ENCODE measurements at regions of chr7 and their contacts with region 1.

Region 1: GRCh38 chr7:148962823-148963582 is 65.3 kb downstream of the PDIA4 start:
- DNase-seq: peak; percentile 76
- ATAC-seq: peak; percentile 78
- H3K4me3 Mint-ChIP-seq: peak overlapping the region; percentile 90
- H3K27ac Mint-ChIP-seq: peak overlapping the region; percentile 85
- H3K4me1 Mint-ChIP-seq: peaks cover 33% of the 10 kb centered on the region
- H3K27me3 Mint-ChIP-seq: peaks cover 5% of the 10 kb centered on the region

Region 2: GRCh38 chr7:148856891-148857290 is 106.1 kb before region 1 on chr7:
- CTCF ChIA-PET with region 1: interaction called, 22 read pairs
- POLR2A ChIA-PET with region 1: no interaction called
- DNase-seq: no peak
- ATAC-seq: peak; percentile 5
- H3K4me3 Mint-ChIP-seq: no peak overlapping the region
- H3K27ac Mint-ChIP-seq: no peak overlapping the region
- H3K4me1 Mint-ChIP-seq: peaks cover 35% of the 10 kb centered on the region
- H3K27me3 Mint-ChIP-seq: no peaks in the 10 kb centered on the region

Region 3: DNA sequence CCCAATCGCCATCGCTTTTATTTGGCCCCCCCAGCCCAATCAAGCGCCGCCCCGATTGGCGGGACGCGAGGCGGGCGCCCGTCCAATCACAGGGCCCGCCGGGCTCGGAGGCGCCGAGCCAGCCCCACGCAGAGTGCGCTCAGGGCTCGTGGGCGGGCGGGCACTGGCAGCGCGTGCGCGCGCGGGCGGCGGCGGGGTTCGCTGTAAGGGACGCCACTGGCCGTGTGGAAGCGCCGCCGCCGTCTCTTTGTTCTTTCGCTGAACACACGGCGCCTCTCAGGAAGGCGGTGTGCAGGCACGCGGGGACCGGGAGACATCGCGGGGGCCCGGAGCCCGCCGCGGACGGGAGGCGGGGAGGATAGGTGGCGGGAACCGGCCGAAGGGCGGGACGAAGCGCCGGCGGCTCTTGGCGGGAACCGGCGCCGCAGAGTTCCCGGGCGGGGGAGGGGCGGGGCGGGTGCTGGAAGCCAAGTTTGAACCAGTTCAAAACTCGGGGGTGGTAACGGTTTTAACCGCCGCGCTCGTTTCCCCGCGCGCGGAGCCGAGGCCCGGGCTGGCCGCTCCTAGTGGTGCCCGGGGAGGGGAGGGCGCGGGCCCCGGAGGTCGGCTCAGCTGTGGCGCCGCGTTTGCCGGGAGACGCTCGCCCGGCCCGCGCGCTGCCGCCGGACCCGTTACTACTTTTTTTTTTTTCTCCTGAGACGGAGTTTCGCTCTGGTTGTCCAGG is 78.5 kb before region 1 on chr7:
- CTCF ChIA-PET with region 1: interaction called, 7 read pairs
- POLR2A ChIA-PET with region 1: interaction called, 10 read pairs
- DNase-seq: peak; percentile 95
- ATAC-seq: peak; percentile 93
- H3K4me3 Mint-ChIP-seq: peak overlapping the region; percentile 92
- H3K27ac Mint-ChIP-seq: peak overlapping the region; percentile 99
- H3K4me1 Mint-ChIP-seq: peaks cover 36% of the 10 kb centered on the region
- H3K27me3 Mint-ChIP-seq: no peaks in the 10 kb centered on the region

Region 4: DNA sequence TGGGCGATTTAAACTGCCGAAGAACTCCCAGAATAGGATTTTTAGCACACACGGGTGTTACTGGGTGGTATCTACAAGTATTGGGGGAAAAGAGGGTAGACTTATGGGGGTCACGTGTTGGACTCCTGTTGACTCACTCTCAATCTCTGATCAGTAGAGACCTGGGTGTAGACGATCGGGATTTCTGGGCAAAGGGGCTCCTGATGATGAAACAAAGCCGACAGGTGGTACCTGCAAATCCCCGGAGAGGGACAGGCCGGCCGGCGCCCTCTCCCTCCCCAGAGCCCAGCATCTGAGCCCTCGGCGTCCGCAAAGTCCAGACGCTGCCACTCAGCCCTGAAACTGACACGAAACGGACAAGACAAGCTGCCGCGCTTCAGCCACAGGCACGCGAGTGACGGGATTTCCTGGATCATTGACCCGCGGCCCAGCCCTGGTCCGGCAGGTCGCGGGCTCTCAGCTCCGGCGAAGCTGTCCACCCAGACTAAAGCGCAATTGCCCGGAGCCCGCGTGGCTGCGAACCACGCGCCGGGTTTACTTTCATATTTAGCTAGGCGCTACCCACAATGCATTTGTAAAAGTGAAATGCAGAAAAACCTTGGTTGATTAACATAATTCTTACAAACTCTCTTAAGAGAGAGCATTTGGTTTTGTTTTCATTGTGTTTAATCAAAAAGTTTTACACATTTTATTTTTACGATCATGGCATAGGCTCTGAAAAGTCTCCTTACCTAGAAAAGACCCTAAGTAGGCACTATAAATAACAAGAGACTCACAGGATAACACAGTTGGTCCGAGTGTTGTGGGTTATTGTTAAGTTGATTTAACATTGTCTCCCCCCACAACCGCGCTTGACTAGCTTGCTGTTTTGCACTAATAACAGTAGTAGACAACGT is 22.1 kb before region 1 on chr7:
- CTCF ChIA-PET with region 1: interaction called, 32 read pairs
- POLR2A ChIA-PET with region 1: interaction called, 3 read pairs
- DNase-seq: peak; percentile 77
- ATAC-seq: peak; percentile 82
- H3K4me3 Mint-ChIP-seq: peak overlapping the region; percentile 97
- H3K27ac Mint-ChIP-seq: peak overlapping the region; percentile 98
- H3K4me1 Mint-ChIP-seq: peaks cover 15% of the 10 kb centered on the region
- H3K27me3 Mint-ChIP-seq: no peaks in the 10 kb centered on the region

Region 5: DNA sequence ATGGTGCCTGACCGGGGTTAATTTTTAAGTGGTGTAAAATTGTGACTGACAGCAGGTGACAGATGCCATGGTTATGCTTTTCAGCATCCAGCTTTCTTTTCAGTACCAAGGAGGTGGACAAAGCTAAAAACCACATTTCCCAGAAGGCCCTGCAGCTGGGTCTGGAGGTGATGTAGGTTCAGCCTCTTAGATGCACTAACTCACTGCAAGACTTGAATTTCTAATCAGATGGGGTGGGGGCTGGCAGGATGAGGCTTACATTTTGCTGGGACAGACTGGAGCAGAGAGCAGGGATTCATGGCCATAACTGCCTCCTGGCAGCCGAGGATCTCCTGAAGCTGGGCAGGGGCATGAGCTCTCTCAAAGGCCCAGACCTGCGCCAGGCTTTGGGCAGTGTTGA is 12.9 kb after region 1 on chr7:
- CTCF ChIA-PET with region 1: interaction called, 11 read pairs
- POLR2A ChIA-PET with region 1: interaction called, 3 read pairs
- DNase-seq: no peak
- ATAC-seq: no peak
- H3K4me3 Mint-ChIP-seq: no peak overlapping the region
- H3K27ac Mint-ChIP-seq: no peak overlapping the region
- H3K4me1 Mint-ChIP-seq: peaks cover 15% of the 10 kb centered on the region
- H3K27me3 Mint-ChIP-seq: peaks cover 2% of the 10 kb centered on the region

Region 6: GRCh38 chr7:148987010-148987750 is 24.2 kb after region 1 on chr7:
- CTCF ChIA-PET with region 1: interaction called, 10 read pairs
- POLR2A ChIA-PET with region 1: interaction called, 4 read pairs
- DNase-seq: peak; percentile 89
- ATAC-seq: peak; percentile 86
- H3K4me3 Mint-ChIP-seq: peak overlapping the region; percentile 97
- H3K27ac Mint-ChIP-seq: peak overlapping the region; percentile 97
- H3K4me1 Mint-ChIP-seq: peaks cover 46% of the 10 kb centered on the region
- H3K27me3 Mint-ChIP-seq: peaks cover 24% of the 10 kb centered on the region

Region 7: GRCh38 chr7:149020483-149020882 is 57.5 kb after region 1 on chr7:
- CTCF ChIA-PET with region 1: no interaction called
- POLR2A ChIA-PET with region 1: no interaction called
- DNase-seq: no peak
- ATAC-seq: no peak
- H3K4me3 Mint-ChIP-seq: no peak overlapping the region
- H3K27ac Mint-ChIP-seq: peak overlapping the region; percentile 5
- H3K4me1 Mint-ChIP-seq: peaks cover 29% of the 10 kb centered on the region
- H3K27me3 Mint-ChIP-seq: no peaks in the 10 kb centered on the region